ENCODE measurements at regions of chr12 and their contacts with region 1.

Region 1: DNA sequence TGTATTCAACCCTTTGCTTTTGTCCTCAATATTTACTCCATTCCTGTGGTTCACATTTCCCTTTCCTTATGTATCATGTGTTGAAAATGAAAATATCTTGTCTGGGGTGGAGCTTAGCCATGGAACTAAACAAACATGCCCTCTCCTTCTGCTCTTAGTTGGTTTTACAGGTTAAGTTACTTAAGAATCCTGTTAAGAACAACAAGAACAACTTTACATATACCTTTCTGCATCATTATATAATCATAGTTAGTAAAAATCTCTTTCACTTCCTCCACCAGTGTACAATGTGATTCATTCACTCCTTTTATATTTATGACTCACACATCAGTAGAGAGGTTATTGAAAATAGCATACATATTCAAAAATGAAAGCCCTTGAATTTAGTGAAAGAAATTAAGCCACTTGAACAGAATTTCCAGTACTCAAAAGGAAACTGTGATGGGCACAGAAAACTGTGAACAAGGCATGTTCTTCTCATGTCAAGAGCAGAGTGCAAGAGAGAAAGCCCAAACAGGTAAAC is 307.7 kb downstream of the CCDC91 start:
- DNase-seq: peak; percentile 93
- ATAC-seq: peak; percentile 95
- H3K4me3 ChIP-seq: no peak overlapping the region; the same call in 1 of the 2 replicates
- H3K27ac ChIP-seq: peak overlapping the region; percentile 63
- H3K4me1 ChIP-seq: peaks cover 26% of the 10 kb centered on the region
- H3K27me3 ChIP-seq: no peaks in the 10 kb centered on the region
- CTCF ChIP-seq: no peak

Region 2: GRCh38 chr12:28190321-28191050 is 307.5 kb before region 1 on chr12 and contains the start of gene CCDC91:
- CTCF ChIA-PET with region 1: no interaction called
- POLR2A ChIA-PET with region 1: no interaction called
- intact Hi-C with region 1: loop called (anchors 5 kb)
- DNase-seq: peak; percentile 84
- ATAC-seq: peak; percentile 78
- H3K4me3 ChIP-seq: peak within 1 kb of the TSS; percentile 76
- H3K27ac ChIP-seq: peak within 1 kb of the TSS; percentile 88
- H3K4me1 ChIP-seq: peaks cover 19% of the 10 kb centered on the region
- H3K27me3 ChIP-seq: no peaks in the 10 kb centered on the region
- CTCF ChIP-seq: no peak
- total RNA-seq, gene CCDC91: 15.7 and 22.2 TPM in 2 replicates

Region 3: GRCh38 chr12:28539691-28540323 is 41.9 kb after region 1 on chr12:
- CTCF ChIA-PET with region 1: no interaction called
- POLR2A ChIA-PET with region 1: no interaction called
- intact Hi-C with region 1: loop called (anchors 2 kb)
- DNase-seq: peak; percentile 57
- ATAC-seq: peak; percentile 61
- H3K4me3 ChIP-seq: no peak overlapping the region
- H3K27ac ChIP-seq: no peak overlapping the region
- H3K4me1 ChIP-seq: peaks cover 18% of the 10 kb centered on the region
- H3K27me3 ChIP-seq: no peaks in the 10 kb centered on the region
- CTCF ChIP-seq: no peak

Region 4: DNA sequence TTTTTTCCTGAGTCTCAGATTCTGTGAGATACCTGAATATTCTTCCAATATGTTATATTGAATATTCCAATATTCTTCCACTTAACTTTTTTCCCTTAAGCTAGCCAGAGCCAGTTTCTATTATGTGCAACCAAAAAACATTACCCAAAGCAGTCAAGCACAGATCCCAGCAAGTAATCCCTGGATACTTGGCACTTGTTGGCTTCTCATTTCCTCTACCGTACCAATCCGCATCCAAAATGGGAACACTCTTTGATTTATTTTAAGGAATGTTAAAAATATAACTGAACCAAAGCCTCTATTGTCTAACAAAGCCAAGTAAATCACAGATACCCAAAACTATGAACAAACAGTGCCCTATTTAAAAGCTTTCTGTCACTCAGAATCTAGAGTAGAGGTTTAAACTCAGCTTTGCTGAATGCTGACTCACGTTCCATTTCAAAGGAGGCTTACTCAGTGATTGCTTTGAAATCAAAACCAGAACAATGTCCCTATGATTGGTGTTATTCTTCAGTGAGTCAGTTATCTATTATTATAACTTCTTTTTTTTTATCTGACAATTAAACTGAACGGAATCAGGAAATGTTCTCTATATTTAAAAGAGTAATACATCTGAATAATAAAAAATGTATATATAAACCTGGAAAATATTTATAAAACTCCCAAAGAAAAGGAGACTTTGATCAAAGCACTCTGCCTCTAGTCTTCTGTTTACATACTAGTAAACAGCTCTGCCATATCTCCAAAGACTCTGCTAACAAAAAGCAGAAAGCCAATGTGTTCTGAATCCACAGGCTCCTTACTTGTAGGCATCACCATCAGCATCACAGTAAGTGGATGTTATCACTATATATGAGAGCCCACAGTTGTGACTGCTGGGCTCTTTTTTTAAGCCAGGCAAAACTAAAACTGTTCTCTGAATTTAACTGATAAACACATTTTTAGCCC is 53.1 kb after region 1 on chr12:
- CTCF ChIA-PET with region 1: no interaction called
- POLR2A ChIA-PET with region 1: no interaction called
- intact Hi-C with region 1: loop called (anchors 5 kb)
- DNase-seq: peak; percentile 89
- ATAC-seq: peak; percentile 99
- H3K4me3 ChIP-seq: no peak overlapping the region
- H3K27ac ChIP-seq: peak overlapping the region; percentile 50
- H3K4me1 ChIP-seq: peaks cover 14% of the 10 kb centered on the region
- H3K27me3 ChIP-seq: no peaks in the 10 kb centered on the region
- CTCF ChIP-seq: no peak